ENCODE measurements at regions of chr9 and their contacts with region 1.

Region 1: DNA sequence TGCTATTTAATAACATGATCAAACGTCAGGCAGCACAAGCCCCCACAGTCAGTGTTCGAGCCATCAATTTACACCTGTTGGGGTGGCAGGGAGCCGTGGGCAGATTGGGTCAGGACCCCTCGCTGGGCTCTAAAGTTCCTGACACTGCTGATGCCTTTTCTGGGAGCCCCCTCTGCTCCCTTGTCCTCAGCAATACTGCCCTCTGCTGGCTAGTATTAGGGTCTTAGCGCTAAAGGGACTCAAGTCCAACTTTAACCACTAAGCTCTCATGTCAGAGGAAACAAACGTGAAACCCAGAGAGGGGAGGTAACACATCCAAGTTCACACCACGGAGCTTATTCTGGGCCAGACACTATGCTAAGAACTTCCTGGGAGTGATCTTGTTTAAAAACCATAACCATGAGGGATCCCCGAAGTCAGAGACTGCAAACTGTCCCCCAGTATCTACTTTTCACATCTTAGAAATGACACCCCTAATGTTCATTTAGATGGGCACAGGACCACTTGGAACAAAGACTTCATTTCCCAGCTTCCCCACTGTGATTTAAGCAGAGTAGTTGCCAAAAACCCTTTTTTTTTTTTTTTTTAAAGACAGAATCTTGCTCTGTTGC is 20.4 kb downstream of the ANKS6 start:
- DNase-seq: peak in 1 of 2 donors; percentile 45
- ATAC-seq: peak in 5 of 8 donors; percentile 26 to 68 (median 54)
- H3K4me3 ChIP-seq: no peak overlapping the region
- H3K27ac ChIP-seq: no peak overlapping the region
- H3K4me1 ChIP-seq: no peaks in the 10 kb centered on the region
- H3K27me3 ChIP-seq: no peaks in the 10 kb centered on the region
- CTCF ChIP-seq: peak; percentile 49 to 83 (median 70)

Region 2: GRCh38 chr9:98479938-98480847 is 295.7 kb before region 1 on chr9:
- intact Hi-C with region 1: loop called in 1 of 10 experiments (anchors 10 kb)
- DNase-seq: no peak
- ATAC-seq: no peak
- H3K4me3 ChIP-seq: no peak overlapping the region
- H3K27ac ChIP-seq: no peak overlapping the region
- H3K4me1 ChIP-seq: peaks cover 0 to 5% (median 0%) of the 10 kb centered on the region in 9 donors
- H3K27me3 ChIP-seq: peaks cover 0 to 13% (median 3%) of the 10 kb centered on the region in 7 donors
- CTCF ChIP-seq: no peak

Region 3: GRCh38 chr9:98536542-98537173 is 239.3 kb before region 1 on chr9:
- intact Hi-C with region 1: loop called in 1 of 10 experiments (anchors 10 kb)
- DNase-seq: no peak
- ATAC-seq: no peak
- H3K4me3 ChIP-seq: no peak overlapping the region
- H3K27ac ChIP-seq: no peak overlapping the region
- H3K4me1 ChIP-seq: no peaks in the 10 kb centered on the region
- H3K27me3 ChIP-seq: peaks cover 0 to 8% (median 0%) of the 10 kb centered on the region in 7 donors
- CTCF ChIP-seq: peak in 4 of 9 donors; percentile 9 to 41 (median 22)

Region 4: DNA sequence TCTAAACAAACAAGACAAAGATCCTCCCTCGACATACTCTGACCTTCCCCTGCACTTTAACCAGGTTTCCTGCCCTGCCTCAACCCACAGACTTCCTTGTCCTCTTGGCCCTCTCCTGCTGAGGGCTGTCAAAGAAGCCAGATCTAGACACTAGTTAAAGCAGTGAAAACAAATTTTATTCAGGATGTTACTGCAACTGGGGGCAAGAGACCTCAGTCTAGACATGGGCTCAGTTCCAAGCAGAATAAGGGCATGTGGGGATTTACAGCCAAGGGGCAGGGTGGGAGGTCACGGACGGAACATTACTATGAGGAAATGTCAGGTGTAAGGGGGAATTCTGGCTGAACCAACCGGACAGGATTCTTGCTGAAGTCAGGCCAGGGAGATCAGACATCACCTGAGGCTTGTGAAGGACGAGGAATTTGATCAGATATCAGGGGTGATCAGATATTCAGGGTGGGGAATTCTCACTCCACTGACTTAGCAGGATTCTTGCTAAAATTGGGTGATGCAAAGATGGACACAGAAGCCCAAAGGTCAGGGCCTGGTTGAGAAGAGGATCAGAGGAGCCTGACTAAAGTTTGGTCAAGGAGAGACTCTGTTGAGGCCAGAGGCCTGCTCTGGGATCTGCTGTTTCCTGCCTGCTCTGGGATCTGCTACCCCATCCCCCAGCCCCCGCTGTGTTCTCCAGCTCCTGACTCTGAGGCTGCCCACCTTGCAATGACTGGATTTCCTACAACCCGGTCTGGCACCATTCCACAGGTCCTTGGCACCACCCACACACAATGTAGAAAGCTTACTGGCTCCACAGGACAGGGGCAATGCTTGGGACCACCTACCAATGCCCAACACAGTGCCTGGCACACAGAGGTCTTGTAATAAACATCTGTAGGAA is 88.7 kb before region 1 on chr9:
- intact Hi-C with region 1: no loop called
- DNase-seq: no peak
- ATAC-seq: no peak
- H3K4me3 ChIP-seq: no peak overlapping the region
- H3K27ac ChIP-seq: no peak overlapping the region
- H3K4me1 ChIP-seq: no peaks in the 10 kb centered on the region
- H3K27me3 ChIP-seq: peaks cover 0 to 4% (median 0%) of the 10 kb centered on the region in 7 donors
- CTCF ChIP-seq: no peak

Region 5: GRCh38 chr9:98833090-98833956 is 57.4 kb after region 1 on chr9:
- intact Hi-C with region 1: no loop called
- DNase-seq: peak; percentile 18 to 36
- ATAC-seq: peak in 4 of 8 donors; percentile 52 to 90 (median 62)
- H3K4me3 ChIP-seq: no peak overlapping the region
- H3K27ac ChIP-seq: no peak overlapping the region
- H3K4me1 ChIP-seq: peaks cover 0 to 7% (median 0%) of the 10 kb centered on the region in 9 donors
- H3K27me3 ChIP-seq: no peaks in the 10 kb centered on the region
- CTCF ChIP-seq: no peak

Region 6: GRCh38 chr9:99040911-99041582 is 265.1 kb after region 1 on chr9:
- intact Hi-C with region 1: no loop called
- DNase-seq: no peak
- ATAC-seq: peak in 1 of 8 donors; percentile 31
- H3K4me3 ChIP-seq: no peak overlapping the region
- H3K27ac ChIP-seq: peak overlapping the region in 3 of 10 donors; percentile 43 to 53 (median 49)
- H3K4me1 ChIP-seq: peaks cover 0 to 37% (median 19%) of the 10 kb centered on the region in 9 donors
- H3K27me3 ChIP-seq: peaks cover 0 to 63% (median 0%) of the 10 kb centered on the region in 7 donors
- CTCF ChIP-seq: no peak

Region 7: DNA sequence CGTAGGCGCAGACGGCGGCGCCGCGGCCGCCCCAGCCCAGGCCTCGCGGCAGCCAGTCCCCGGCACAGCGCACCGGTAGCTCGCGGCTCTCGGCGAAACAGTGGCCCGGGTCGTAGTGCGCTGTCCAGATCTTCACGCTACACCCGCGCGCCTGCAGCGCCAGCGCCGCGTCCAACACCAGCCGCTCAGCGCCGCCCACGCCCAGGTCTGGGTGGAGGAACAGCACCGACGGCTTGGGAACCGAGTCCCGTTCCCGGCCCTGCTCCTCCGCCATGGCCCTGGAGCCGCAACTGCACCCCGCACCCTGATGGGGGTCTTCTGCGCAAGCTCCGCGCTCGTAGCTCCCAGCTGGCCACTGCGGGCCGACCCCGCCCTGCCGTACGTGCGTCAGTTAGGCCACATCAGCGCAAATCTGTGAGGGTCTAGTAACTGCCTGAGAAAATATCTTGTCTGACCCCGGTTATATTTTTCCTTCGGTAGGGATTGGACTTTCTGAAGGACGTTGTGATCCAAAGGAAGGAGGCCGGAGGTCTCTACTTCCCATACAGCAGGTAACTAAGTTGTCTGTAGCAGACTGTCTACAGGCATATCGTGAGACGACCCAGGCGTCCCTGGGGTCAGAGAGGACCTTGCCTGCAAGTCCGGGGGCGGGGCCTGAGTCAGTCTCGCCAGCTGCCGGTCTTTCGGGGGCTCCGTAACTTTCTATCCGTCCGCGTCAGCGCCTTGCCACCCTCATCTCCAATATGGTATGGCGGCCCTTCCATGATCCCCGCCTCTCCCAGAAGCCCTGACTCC is 445.9 kb after region 1 on chr9 and contains the starts of genes ALG2 and SEC61B:
- intact Hi-C with region 1: no loop called
- DNase-seq: peak; percentile 93 to 97
- ATAC-seq: peak; percentile 98 to 99 (median 99)
- H3K4me3 ChIP-seq: peak within 1 kb of the TSS; percentile 65 to 97 (median 88)
- H3K27ac ChIP-seq: peak within 1 kb of the TSS; percentile 87 to 96 (median 93)
- H3K4me1 ChIP-seq: peaks cover 14 to 85% (median 72%) of the 10 kb centered on the region in 9 donors
- H3K27me3 ChIP-seq: no peaks in the 10 kb centered on the region
- CTCF ChIP-seq: peak in 1 of 9 donors; percentile 21
- total RNA-seq, gene ALG2: 10.6 to 27.3 (median 15.0) TPM
- total RNA-seq, gene SEC61B: 24.1 to 72.6 (median 32.9) TPM

Measured in heart right ventricle (tissue), 16 donors.